CD4-positive, alpha-beta T cell (primary cell): ENCODE measurements at regions of chr13 and their contacts with region 1.

Region 1: GRCh38 chr13:31909864-31910551 is 121.6 kb upstream of the FRY start:
- DNase-seq: peak; percentile 8 to 83 (median 27)
- ATAC-seq: peak; percentile 46
- H3K4me3 ChIP-seq: no peak overlapping the region
- H3K4me3 Mint-ChIP-seq: no peak overlapping the region
- H3K27ac ChIP-seq: no peak overlapping the region
- H3K27ac Mint-ChIP-seq: no peak overlapping the region
- H3K4me1 ChIP-seq: peaks cover 10% of the 10 kb centered on the region
- H3K4me1 Mint-ChIP-seq: peaks cover 8% of the 10 kb centered on the region
- H3K27me3 ChIP-seq: no peaks in the 10 kb centered on the region
- H3K27me3 Mint-ChIP-seq: no peaks in the 10 kb centered on the region
- CTCF ChIP-seq: peak; percentile 92

Region 2: DNA sequence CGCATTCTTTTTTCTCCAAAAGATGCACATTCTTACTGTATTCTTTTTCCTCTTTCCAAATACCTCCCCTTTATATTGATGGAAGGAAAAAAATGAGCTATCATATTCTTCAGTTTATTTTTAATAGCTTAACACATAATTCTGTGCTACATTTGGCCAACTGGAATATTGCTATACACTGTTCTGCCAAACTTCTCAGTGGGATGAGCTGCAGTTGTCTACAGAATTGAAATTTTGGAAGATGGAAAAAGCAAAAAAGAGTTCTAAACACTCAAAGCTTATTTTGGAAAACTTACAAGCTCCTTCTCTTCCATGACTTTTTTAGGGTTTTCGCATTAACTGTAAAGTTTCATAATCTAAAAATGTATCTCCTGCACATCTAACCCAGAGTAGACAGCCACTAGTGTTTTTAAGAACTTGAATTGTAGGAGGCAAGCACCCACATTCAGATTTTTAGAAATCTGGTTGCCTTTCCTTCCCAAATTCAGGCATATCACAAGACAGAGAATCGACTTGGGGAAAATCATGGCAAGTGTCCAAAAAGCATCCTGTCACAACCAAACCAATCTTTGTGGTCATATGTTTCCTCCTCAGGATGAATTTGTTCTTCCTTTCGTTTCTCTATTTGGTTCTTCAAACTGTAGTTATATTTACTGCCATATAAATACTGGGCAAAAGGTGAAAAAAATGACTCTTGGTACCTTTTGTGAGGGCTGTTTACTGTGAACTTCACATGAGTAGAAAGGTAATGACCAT is 10.1 kb after region 1 on chr13:
- CTCF ChIA-PET with region 1: interaction called, 22 read pairs
- POLR2A ChIA-PET with region 1: no interaction called
- intact Hi-C with region 1: no loop called
- DNase-seq: no peak
- ATAC-seq: no peak
- H3K4me3 ChIP-seq: no peak overlapping the region
- H3K4me3 Mint-ChIP-seq: no peak overlapping the region
- H3K27ac ChIP-seq: no peak overlapping the region
- H3K27ac Mint-ChIP-seq: peak overlapping the region; percentile 55
- H3K4me1 ChIP-seq: no peaks in the 10 kb centered on the region
- H3K4me1 Mint-ChIP-seq: peaks cover 6% of the 10 kb centered on the region
- H3K27me3 ChIP-seq: no peaks in the 10 kb centered on the region
- H3K27me3 Mint-ChIP-seq: no peaks in the 10 kb centered on the region
- CTCF ChIP-seq: no peak

Region 3: DNA sequence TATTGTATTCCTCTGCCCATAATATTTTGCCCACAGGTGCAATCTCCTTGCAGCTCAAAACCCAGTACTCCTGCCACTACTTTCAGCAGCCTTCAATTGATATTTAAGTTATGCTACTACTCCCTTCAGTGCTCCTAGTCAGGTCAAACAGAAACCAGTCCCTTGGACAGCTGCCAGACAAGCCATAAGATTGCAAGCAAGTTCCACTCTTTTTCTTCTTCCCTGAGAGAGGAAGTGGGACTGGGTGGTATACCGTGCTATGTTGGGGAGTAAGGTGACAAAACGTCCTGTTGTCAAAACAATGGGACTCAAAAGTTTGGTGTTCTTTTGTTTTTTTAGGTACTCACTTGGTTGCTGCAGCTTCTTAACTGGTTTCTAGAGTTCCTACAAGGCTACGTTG is 58.5 kb after region 1 on chr13:
- CTCF ChIA-PET with region 1: interaction called, 10 read pairs
- POLR2A ChIA-PET with region 1: no interaction called
- intact Hi-C with region 1: no loop called
- DNase-seq: peak in 2 of 14 experiments; percentile 13 to 21
- ATAC-seq: no peak
- H3K4me3 ChIP-seq: no peak overlapping the region
- H3K4me3 Mint-ChIP-seq: no peak overlapping the region
- H3K27ac ChIP-seq: no peak overlapping the region
- H3K27ac Mint-ChIP-seq: no peak overlapping the region
- H3K4me1 ChIP-seq: no peaks in the 10 kb centered on the region
- H3K4me1 Mint-ChIP-seq: no peaks in the 10 kb centered on the region
- H3K27me3 ChIP-seq: no peaks in the 10 kb centered on the region
- H3K27me3 Mint-ChIP-seq: no peaks in the 10 kb centered on the region
- CTCF ChIP-seq: no peak

Region 4: GRCh38 chr13:32443111-32443510 is 533.1 kb after region 1 on chr13:
- CTCF ChIA-PET with region 1: no interaction called
- POLR2A ChIA-PET with region 1: no interaction called
- intact Hi-C with region 1: loop called (anchors 5 to 10 kb)
- DNase-seq: peak in 11 of 14 experiments; percentile 9 to 76 (median 21)
- ATAC-seq: peak; percentile 77
- H3K4me3 ChIP-seq: no peak overlapping the region
- H3K4me3 Mint-ChIP-seq: no peak overlapping the region
- H3K27ac ChIP-seq: no peak overlapping the region
- H3K27ac Mint-ChIP-seq: no peak overlapping the region
- H3K4me1 ChIP-seq: no peaks in the 10 kb centered on the region
- H3K4me1 Mint-ChIP-seq: peaks cover 3% of the 10 kb centered on the region
- H3K27me3 ChIP-seq: no peaks in the 10 kb centered on the region
- H3K27me3 Mint-ChIP-seq: no peaks in the 10 kb centered on the region
- CTCF ChIP-seq: peak; percentile 53

Region 5: GRCh38 chr13:32650705-32651311 is 740.8 kb after region 1 on chr13:
- CTCF ChIA-PET with region 1: interaction called, 3 read pairs
- POLR2A ChIA-PET with region 1: no interaction called
- intact Hi-C with region 1: loop called in 1 of 2 experiments (anchors 5 kb)
- DNase-seq: peak in 12 of 14 experiments; percentile 20 to 79 (median 39)
- ATAC-seq: peak; percentile 81
- H3K4me3 ChIP-seq: no peak overlapping the region
- H3K4me3 Mint-ChIP-seq: no peak overlapping the region
- H3K27ac ChIP-seq: no peak overlapping the region
- H3K27ac Mint-ChIP-seq: no peak overlapping the region
- H3K4me1 ChIP-seq: peaks cover 10% of the 10 kb centered on the region
- H3K4me1 Mint-ChIP-seq: peaks cover 45% of the 10 kb centered on the region
- H3K27me3 ChIP-seq: no peaks in the 10 kb centered on the region
- H3K27me3 Mint-ChIP-seq: no peaks in the 10 kb centered on the region
- CTCF ChIP-seq: peak; percentile 85